ENCODE measurements at regions of chr13 and their contacts with region 1.

Region 1: GRCh38 chr13:20566898-20567874 is at the start of gene IFT88:
- DNase-seq: peak; percentile 92 to 95
- H3K4me3 ChIP-seq: peak within 1 kb of the TSS; percentile 79
- H3K4me3 Mint-ChIP-seq: peak within 1 kb of the TSS; percentile 98
- H3K27ac Mint-ChIP-seq: peak within 1 kb of the TSS; percentile 91
- H3K4me1 ChIP-seq: no peaks in the 10 kb centered on the region
- H3K4me1 Mint-ChIP-seq: no peaks in the 10 kb centered on the region
- H3K27me3 ChIP-seq: no peaks in the 10 kb centered on the region
- H3K27me3 Mint-ChIP-seq: no peaks in the 10 kb centered on the region
- CTCF ChIP-seq: no peak
- total RNA-seq, gene IFT88: 12.1 and 12.4 TPM in 2 replicates

Region 2: GRCh38 chr13:20525690-20526544 is 41.3 kb before region 1 on chr13 and contains the start of gene CRYL1:
- CTCF ChIA-PET with region 1: no interaction called
- POLR2A ChIA-PET with region 1: no interaction called
- intact Hi-C with region 1: loop called (anchors 1 kb)
- DNase-seq: peak; percentile 56 to 68
- H3K4me3 ChIP-seq: peak within 1 kb of the TSS; percentile 95
- H3K4me3 Mint-ChIP-seq: peak within 1 kb of the TSS; percentile 68
- H3K27ac Mint-ChIP-seq: no peak within 1 kb of the TSS
- H3K4me1 ChIP-seq: no peaks in the 10 kb centered on the region
- H3K4me1 Mint-ChIP-seq: peaks cover 7% of the 10 kb centered on the region
- H3K27me3 ChIP-seq: no peaks in the 10 kb centered on the region
- H3K27me3 Mint-ChIP-seq: peaks cover 4% of the 10 kb centered on the region
- CTCF ChIP-seq: no peak
- total RNA-seq, gene CRYL1: 4.3 and 6.7 TPM in 2 replicates

Region 3: GRCh38 chr13:20703780-20704445 is 136.7 kb after region 1 on chr13:
- CTCF ChIA-PET with region 1: no interaction called
- POLR2A ChIA-PET with region 1: no interaction called
- intact Hi-C with region 1: loop called (anchors 5 kb)
- DNase-seq: peak; percentile 94 to 97
- H3K4me3 ChIP-seq: peak overlapping the region; percentile 92
- H3K4me3 Mint-ChIP-seq: peak overlapping the region; percentile 92
- H3K27ac Mint-ChIP-seq: no peak overlapping the region
- H3K4me1 ChIP-seq: peaks cover 15% of the 10 kb centered on the region
- H3K4me1 Mint-ChIP-seq: peaks cover 10% of the 10 kb centered on the region
- H3K27me3 ChIP-seq: no peaks in the 10 kb centered on the region
- H3K27me3 Mint-ChIP-seq: no peaks in the 10 kb centered on the region
- CTCF ChIP-seq: peak; percentile 56 to 74

Region 4: GRCh38 chr13:20754009-20754408 is 186.8 kb after region 1 on chr13:
- CTCF ChIA-PET with region 1: no interaction called
- POLR2A ChIA-PET with region 1: no interaction called
- intact Hi-C with region 1: no loop called
- DNase-seq: no peak
- H3K4me3 ChIP-seq: no peak overlapping the region
- H3K4me3 Mint-ChIP-seq: no peak overlapping the region
- H3K27ac Mint-ChIP-seq: no peak overlapping the region
- H3K4me1 ChIP-seq: no peaks in the 10 kb centered on the region
- H3K4me1 Mint-ChIP-seq: peaks cover 7% of the 10 kb centered on the region
- H3K27me3 ChIP-seq: no peaks in the 10 kb centered on the region
- H3K27me3 Mint-ChIP-seq: no peaks in the 10 kb centered on the region
- CTCF ChIP-seq: no peak

Measured in Caco-2 (cell line).